ENCODE measurements at regions of chr16 and their contacts with region 1.

Region 1: GRCh38 chr16:72008424-72009216 is at the start of gene DHODH:
- DNase-seq: peak; percentile 99
- H3K4me3 Mint-ChIP-seq: peak within 1 kb of the TSS; percentile 94
- H3K27ac Mint-ChIP-seq: peak within 1 kb of the TSS; percentile 76
- H3K4me1 Mint-ChIP-seq: peaks cover 21% of the 10 kb centered on the region
- H3K27me3 Mint-ChIP-seq: no peaks in the 10 kb centered on the region
- total RNA-seq, gene DHODH: 18.3 to 19.9 TPM

Region 2: GRCh38 chr16:71723537-71724319 is 284.9 kb before region 1 on chr16:
- CTCF ChIA-PET with region 1: no interaction called
- intact Hi-C with region 1: loop called (anchors 1 kb)
- DNase-seq: peak; percentile 74
- H3K4me3 Mint-ChIP-seq: peak overlapping the region; percentile 80
- H3K27ac Mint-ChIP-seq: no peak overlapping the region
- H3K4me1 Mint-ChIP-seq: peaks cover 18% of the 10 kb centered on the region
- H3K27me3 Mint-ChIP-seq: peaks cover 6% of the 10 kb centered on the region

Region 3: GRCh38 chr16:71845639-71846430 is 162.8 kb before region 1 on chr16 and contains the start of gene ATXN1L:
- CTCF ChIA-PET with region 1: no interaction called
- intact Hi-C with region 1: loop called (anchors 1 kb)
- DNase-seq: peak; percentile 90
- H3K4me3 Mint-ChIP-seq: peak within 1 kb of the TSS; percentile 88
- H3K27ac Mint-ChIP-seq: peak within 1 kb of the TSS; percentile 93
- H3K4me1 Mint-ChIP-seq: peaks cover 44% of the 10 kb centered on the region
- H3K27me3 Mint-ChIP-seq: no peaks in the 10 kb centered on the region
- total RNA-seq, gene ATXN1L: 11.3 to 11.9 TPM

Region 4: GRCh38 chr16:71894921-71895678 is 113.5 kb before region 1 on chr16 and contains the start of gene IST1:
- CTCF ChIA-PET with region 1: no interaction called
- intact Hi-C with region 1: loop called (anchors 1 kb)
- DNase-seq: peak; percentile 99
- H3K4me3 Mint-ChIP-seq: peak within 1 kb of the TSS; percentile 97
- H3K27ac Mint-ChIP-seq: peak within 1 kb of the TSS; percentile 96
- H3K4me1 Mint-ChIP-seq: peaks cover 33% of the 10 kb centered on the region
- H3K27me3 Mint-ChIP-seq: no peaks in the 10 kb centered on the region
- total RNA-seq, gene IST1: 196 to 203 TPM

Region 5: DNA sequence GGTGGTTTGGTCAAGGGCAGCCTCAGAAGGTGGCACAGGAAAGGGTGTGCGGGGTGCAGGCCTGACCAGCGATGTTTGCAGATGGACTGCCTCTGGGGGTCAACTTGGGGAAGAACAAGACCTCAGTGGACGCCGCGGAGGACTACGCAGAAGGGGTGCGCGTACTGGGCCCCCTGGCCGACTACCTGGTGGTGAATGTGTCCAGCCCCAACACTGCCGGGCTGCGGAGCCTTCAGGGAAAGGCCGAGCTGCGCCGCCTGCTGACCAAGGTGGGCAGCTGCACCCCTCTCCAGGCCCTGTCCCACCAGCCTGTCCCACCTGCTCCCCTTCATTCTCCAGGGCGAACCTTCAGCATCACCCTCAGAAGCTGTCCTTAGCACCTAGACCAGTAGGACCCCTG is 12.4 kb after region 1 on chr16:
- CTCF ChIA-PET with region 1: no interaction called
- intact Hi-C with region 1: no loop called
- DNase-seq: no peak
- H3K4me3 Mint-ChIP-seq: no peak overlapping the region
- H3K27ac Mint-ChIP-seq: peak overlapping the region; percentile 41
- H3K4me1 Mint-ChIP-seq: no peaks in the 10 kb centered on the region
- H3K27me3 Mint-ChIP-seq: no peaks in the 10 kb centered on the region

Region 6: DNA sequence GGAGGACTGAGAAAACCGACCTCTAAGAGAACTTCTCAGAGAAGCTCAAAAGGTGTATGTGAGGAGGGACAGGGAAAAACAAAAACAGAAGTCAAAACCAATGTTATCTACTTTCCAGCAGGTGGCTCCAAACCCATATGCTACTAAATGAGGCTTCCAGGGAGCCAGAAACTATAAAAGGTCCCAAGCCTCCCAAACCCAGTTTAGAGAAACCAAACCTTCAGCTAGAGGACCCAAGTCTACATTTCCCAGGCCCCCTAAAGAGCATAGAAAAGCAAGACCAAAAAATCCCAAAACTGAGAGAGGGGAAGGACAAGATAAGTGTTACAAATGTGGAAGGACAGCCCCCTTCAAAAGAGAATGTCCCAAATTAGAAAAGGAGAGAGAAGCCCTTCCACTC is 58.1 kb after region 1 on chr16:
- CTCF ChIA-PET with region 1: no interaction called
- intact Hi-C with region 1: no loop called
- DNase-seq: no peak
- H3K4me3 Mint-ChIP-seq: no peak overlapping the region
- H3K27ac Mint-ChIP-seq: no peak overlapping the region
- H3K4me1 Mint-ChIP-seq: no peaks in the 10 kb centered on the region
- H3K27me3 Mint-ChIP-seq: no peaks in the 10 kb centered on the region

Region 7: DNA sequence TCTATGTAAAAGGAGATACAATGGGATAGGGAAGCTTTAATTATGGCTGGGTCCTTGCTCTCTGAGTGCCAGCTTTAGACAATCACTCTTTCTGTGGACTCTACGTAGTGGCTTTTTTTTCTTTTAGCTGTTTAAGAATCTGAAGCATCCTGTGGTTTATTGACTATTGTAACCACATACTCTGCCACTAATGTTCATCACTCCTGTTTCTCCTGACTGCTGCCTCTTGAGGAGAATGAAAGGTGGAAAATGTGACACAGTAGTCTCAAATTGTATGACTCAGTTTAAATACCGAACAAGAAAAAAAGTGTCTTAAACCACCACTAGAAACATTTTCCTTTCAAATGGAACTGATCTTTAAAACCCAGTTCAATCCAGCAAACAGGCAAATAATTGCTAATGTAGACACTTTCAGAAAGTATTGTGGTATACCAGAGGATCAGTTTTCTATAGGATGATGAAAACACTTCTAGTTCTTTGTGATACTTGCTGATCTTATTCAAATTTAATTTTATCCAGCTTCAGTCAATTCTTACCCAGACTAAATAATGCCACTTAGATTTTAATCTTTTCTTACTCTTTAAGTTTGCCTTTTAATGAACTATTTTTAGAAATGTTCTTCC is 466.0 kb after region 1 on chr16:
- CTCF ChIA-PET with region 1: no interaction called
- intact Hi-C with region 1: loop called (anchors 1 kb)
- DNase-seq: peak; percentile 10
- H3K4me3 Mint-ChIP-seq: no peak overlapping the region
- H3K27ac Mint-ChIP-seq: no peak overlapping the region
- H3K4me1 Mint-ChIP-seq: peaks cover 14% of the 10 kb centered on the region
- H3K27me3 Mint-ChIP-seq: no peaks in the 10 kb centered on the region

Region 8: DNA sequence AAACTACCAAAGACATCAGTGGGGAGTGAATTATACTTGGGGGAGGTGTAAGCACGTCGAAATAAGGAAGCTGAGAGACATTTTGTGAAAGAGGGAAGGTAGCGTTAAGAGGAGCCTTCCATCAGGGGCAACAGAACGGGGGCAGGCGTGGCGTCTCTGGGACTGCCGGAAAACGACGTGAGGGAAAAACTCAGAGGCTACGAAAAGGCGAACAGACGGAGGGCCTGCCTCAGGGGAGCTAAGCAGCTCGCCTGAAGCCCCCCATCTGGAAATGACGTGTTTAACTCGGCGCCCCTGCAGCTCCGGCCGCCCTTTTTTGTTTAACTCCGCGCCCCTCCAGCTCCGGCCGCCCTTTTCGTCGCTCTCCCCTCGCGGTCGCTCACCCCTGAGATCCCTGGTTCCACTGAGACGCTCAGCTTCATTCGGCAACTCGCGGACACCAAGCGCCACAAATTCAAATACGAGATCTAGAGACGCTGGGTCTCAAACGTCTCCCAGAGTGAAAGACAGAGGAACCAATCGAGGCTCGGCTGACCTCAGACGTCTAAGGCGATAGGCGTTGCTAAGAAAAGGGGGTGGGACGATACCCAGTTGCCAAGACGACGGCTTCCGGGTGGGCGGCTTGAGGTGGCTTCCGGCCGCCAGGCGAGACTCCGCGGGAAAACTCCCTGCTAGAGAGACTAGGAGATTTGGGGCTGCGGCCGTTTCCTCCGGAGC is 656.0 kb after region 1 on chr16:
- CTCF ChIA-PET with region 1: no interaction called
- intact Hi-C with region 1: loop called (anchors 1 kb)
- DNase-seq: peak; percentile 98
- H3K4me3 Mint-ChIP-seq: peak overlapping the region; percentile 100
- H3K27ac Mint-ChIP-seq: peak overlapping the region; percentile 95
- H3K4me1 Mint-ChIP-seq: peaks cover 9% of the 10 kb centered on the region
- H3K27me3 Mint-ChIP-seq: no peaks in the 10 kb centered on the region

Measured in activated naive CD4-positive, alpha-beta T cell treated with anti-CD3 and anti-CD28 coated beads for 36 hours (primary cell).